ENCODE measurements at regions of chr12 and their contacts with region 1.

Region 1: DNA sequence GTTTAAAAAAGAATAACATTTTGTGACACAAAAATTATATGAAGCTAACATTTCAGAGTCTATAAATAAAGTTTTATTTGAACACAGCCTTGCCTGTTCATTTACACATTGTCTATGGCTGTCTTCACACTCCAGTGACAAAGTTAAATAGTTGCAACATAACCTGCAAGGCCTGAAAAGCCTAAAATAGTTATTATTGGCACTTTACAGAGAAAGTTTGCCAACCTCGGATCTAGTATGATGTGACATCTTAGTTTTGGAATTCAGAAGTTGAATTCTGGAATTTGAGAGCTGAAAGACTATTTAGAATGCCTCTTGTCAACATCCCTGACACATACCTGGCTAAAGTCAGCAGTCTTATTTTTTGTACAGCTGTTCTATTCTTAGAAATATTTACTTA is 68.3 kb downstream of the DYRK2 start:
- DNase-seq: peak; percentile 8 to 96
- H3K4me3 ChIP-seq: no peak overlapping the region
- H3K27ac ChIP-seq: peak overlapping the region; percentile 33; the same call in 1 of the 2 replicates
- H3K4me1 ChIP-seq: peaks cover 45% of the 10 kb centered on the region
- H3K27me3 ChIP-seq: no peaks in the 10 kb centered on the region
- CTCF ChIP-seq: no peak

Region 2: DNA sequence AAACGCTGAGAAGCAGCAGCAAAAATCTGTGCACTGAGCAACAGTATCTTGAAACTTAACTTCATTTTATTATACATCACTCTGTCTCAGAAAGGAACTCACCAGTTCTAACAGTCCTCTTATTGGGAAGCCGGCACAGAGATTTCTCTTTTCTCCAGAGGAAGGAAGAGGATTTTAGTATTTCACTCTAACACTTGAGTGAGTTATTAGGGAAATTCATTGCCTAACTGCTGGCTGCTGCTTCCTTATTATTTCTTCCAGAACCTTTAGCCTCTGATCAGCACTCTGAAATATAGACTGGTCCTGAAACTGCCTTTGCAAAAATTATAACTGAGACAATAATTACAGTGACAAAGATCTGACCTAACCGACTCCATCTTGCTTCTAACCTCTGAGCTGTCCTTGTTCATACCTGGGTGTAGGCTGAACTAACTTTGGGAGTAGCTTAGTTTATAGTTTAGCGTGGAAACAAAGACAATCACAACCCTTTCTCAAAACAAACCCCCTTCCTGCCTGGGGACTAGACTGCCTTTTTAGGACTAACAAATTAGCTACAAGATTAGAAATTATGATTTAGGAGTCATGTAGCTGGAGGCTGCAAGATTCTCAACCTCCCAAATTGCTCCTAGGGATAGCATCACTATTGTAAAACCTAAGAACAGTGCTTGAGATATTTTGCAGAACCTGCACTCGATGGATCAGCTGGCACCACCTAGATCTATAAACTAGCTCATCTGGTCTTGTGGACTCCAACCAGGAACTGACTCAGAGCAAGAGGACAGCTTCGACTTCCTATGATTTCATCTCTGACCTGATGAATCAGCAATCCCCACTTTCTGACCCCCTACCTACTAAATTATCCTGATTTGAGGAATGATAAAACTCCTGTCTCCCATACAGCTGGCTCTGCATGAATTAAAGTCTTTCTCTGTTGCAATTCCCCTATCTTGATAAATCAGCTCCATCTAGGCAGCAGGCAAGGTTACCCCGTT is 49.3 kb after region 1 on chr12:
- CTCF ChIA-PET with region 1: no interaction called
- POLR2A ChIA-PET with region 1: interaction called, 13 read pairs
- intact Hi-C with region 1: no loop called
- DNase-seq: peak; percentile 12 to 87
- H3K4me3 ChIP-seq: no peak overlapping the region
- H3K27ac ChIP-seq: peak overlapping the region; percentile 57
- H3K4me1 ChIP-seq: peaks cover 18% of the 10 kb centered on the region
- H3K27me3 ChIP-seq: no peaks in the 10 kb centered on the region
- CTCF ChIP-seq: no peak

Region 3: GRCh38 chr12:67921286-67921685 is 204.5 kb after region 1 on chr12:
- CTCF ChIA-PET with region 1: no interaction called
- POLR2A ChIA-PET with region 1: no interaction called
- intact Hi-C with region 1: loop called (anchors 2 kb)
- DNase-seq: no peak
- H3K4me3 ChIP-seq: no peak overlapping the region
- H3K27ac ChIP-seq: no peak overlapping the region
- H3K4me1 ChIP-seq: peaks cover 65% of the 10 kb centered on the region
- H3K27me3 ChIP-seq: no peaks in the 10 kb centered on the region
- CTCF ChIP-seq: no peak